Head of caudate nucleus (tissue), 42 donors: ENCODE measurements at regions of chr19 and their contacts with region 1.

Region 1: DNA sequence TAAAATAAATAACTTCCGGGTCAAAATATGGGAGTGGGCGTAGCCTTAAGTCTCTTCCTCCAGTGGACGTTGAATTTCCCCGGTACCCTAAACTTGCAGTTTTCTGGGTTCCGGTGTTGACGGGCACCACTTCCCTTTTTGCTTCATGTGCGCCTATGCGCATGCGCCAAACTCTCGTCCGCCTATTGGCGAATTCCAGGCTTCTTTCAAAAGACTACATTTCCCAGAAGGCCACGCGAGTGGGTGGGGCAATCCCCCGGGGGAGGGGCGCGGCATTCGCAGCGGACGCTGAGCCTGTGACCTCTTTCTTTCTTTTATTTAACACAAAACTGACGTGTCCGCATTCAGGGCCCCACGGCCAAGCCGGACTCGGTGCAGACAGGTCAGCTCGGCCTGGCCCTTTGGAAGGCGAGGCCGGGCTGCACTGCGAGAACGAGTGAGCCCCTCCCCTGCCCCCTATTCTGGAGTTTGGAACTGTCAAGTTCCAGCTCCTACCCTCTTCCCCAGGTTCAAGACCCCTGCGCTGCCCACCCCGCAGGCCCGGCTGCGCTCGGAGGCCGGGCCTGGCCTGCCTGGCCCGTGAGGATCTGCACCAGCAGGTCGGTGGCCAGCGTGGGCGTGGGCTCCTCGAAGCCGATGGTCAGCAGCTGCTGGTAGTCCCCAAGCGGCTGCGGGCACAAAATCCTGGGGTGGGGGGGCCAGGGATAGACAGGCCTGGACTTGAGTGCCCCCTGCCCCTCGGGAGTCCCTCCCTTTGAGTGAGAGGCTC is 4.1 kb downstream of the C19orf67 start:
- DNase-seq: peak; percentile 93 to 100 (median 99)

Region 2: GRCh38 chr19:14117668-14118164 is 36.2 kb after region 1 on chr19 and contains the start of gene PRKACA:
- intact Hi-C with region 1: loop called (anchors 5 kb)
- DNase-seq: peak; percentile 98 to 100 (median 100)

Region 3: GRCh38 chr19:14136509-14137281 is 55.2 kb after region 1 on chr19 and contains the start of gene ASF1B:
- intact Hi-C with region 1: no loop called
- DNase-seq: peak; percentile 96 to 100 (median 99)

Region 4: GRCh38 chr19:14167576-14168138 is 86.1 kb after region 1 on chr19:
- intact Hi-C with region 1: no loop called
- DNase-seq: no peak

Region 5: DNA sequence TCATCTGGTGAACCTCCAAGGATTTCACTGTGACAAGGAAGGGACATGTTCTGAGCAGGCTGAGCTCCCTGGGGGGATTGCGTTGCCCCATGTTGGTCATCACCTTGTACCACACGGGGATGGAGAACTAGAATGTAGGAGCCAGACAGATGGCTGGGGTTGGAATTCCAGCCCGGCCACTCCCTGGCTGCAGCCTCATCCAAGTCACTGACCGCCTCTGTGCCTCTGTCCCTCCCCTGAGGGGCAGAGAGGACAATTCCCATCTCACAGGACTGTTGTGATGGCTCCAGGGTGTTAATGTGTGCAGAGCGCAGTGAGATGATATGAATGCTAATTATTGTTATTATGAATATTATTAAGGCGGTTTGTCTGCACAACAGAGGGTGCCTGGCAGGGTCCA is 100.4 kb after region 1 on chr19:
- intact Hi-C with region 1: no loop called
- DNase-seq: no peak